Activated CD4-positive, alpha-beta memory T cell treated with anti-CD3 and anti-CD28 coated beads for 36 hours (primary cell): ENCODE measurements at regions of chr9 and their contacts with region 1.

Region 1: DNA sequence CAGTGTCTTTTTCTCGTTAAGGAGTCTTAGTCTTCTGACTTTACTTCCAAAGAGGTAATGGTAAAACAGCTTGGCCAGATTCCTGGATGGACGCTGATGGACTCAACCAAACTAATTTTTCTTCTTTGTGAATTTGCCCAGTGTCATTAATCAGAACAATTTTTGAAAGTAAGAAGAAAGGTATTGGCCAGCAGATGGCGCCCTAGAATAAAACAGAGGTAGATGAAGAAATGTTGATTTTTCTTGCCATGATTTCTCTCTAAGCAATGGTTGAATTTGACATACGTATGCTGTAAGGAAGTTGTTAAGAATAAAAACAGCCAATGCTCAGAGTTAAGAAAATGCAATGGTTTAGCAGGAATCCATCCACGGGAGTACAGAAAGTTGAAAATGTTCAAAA is 500.0 kb downstream of the DIRAS2 start:
- DNase-seq: peak; percentile 46
- H3K4me3 Mint-ChIP-seq: no peak overlapping the region
- H3K27ac Mint-ChIP-seq: no peak overlapping the region
- H3K4me1 Mint-ChIP-seq: no peaks in the 10 kb centered on the region
- H3K27me3 Mint-ChIP-seq: peaks cover 16% of the 10 kb centered on the region

Region 2: GRCh38 chr9:89999534-90000370 is 142.8 kb before region 1 on chr9:
- CTCF ChIA-PET with region 1: no interaction called
- POLR2A ChIA-PET with region 1: no interaction called
- intact Hi-C with region 1: no loop called
- DNase-seq: peak; percentile 85
- H3K4me3 Mint-ChIP-seq: peak overlapping the region; percentile 63
- H3K27ac Mint-ChIP-seq: peak overlapping the region; percentile 73
- H3K4me1 Mint-ChIP-seq: peaks cover 34% of the 10 kb centered on the region
- H3K27me3 Mint-ChIP-seq: no peaks in the 10 kb centered on the region

Region 3: DNA sequence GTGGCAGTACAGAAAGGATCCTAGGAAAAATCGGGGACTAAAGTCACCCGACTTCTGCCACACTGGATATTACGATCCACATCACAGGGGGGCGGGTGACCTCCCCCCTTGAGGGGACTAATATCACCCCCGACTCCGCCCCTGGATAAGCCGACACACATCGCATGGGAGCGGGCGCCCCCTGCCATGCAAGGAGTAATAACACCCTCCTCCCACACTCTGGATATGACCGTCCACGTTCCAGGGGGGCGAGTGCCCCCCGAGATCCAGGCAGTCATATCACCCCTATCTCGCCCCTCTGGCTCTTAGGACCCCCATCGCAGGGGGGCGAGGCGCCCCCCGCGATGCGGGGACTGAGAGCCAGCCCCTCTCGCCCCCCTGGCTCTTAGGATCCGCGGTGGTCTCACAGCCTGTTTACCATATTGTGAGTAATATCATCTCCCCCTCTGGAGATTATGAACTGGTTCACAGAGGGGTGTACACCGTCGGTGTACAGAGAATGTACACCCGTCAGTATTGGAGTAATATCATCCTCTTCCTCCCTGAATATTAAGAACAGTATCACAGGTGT is 77.1 kb after region 1 on chr9:
- CTCF ChIA-PET with region 1: no interaction called
- POLR2A ChIA-PET with region 1: no interaction called
- intact Hi-C with region 1: loop called (anchors 2 kb)
- DNase-seq: peak; percentile 39
- H3K4me3 Mint-ChIP-seq: no peak overlapping the region
- H3K27ac Mint-ChIP-seq: no peak overlapping the region
- H3K4me1 Mint-ChIP-seq: no peaks in the 10 kb centered on the region
- H3K27me3 Mint-ChIP-seq: peaks cover 7% of the 10 kb centered on the region

Region 4: DNA sequence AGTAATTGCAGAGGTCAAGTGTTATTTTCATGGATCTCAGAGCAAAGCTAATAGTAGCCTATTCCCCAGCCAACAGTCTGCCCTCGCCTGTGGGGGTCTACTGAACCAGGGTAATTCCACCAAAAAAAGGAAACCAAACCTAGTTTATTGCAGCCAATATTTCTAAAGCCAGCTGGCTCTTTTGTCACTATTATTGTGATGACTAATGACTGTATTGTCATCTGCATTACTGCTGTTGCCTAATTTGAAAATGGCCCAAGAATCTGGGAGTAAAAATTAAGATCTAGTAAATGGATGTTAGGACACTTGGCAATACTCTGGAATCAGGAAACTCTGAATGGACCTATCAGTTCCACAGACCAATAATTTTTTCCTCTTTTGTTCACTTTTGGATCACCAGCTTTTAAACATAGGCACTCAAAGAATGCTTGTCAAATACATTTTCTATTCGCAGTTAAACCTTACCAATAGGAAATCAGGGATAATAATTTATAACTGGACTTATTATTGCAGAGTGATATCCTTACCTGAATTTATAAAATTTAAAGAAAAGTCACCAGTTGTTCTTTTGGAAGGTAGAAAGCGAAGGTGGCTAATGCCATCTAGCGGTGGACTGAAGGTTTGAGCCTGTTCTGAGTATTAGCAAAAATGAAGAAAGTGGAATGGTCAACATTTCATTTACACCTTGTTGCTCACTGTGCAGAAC is 728.2 kb after region 1 on chr9:
- CTCF ChIA-PET with region 1: interaction called, 5 read pairs
- POLR2A ChIA-PET with region 1: no interaction called
- intact Hi-C with region 1: loop called (anchors 5 kb)
- DNase-seq: peak; percentile 41
- H3K4me3 Mint-ChIP-seq: no peak overlapping the region
- H3K27ac Mint-ChIP-seq: no peak overlapping the region
- H3K4me1 Mint-ChIP-seq: no peaks in the 10 kb centered on the region
- H3K27me3 Mint-ChIP-seq: peaks cover 9% of the 10 kb centered on the region